Dorsolateral prefrontal cortex (tissue), 120 donors: ENCODE measurements at regions of chr15 and their contacts with region 1.

Region 1: GRCh38 chr15:99076552-99077308 is 28.1 kb upstream of the SYNM start:
- DNase-seq: peak in 5 of 10 donors; percentile 32 to 53 (median 39)
- H3K4me3 ChIP-seq: peak overlapping the region in 58 of 59 donors; percentile 12 to 65 (median 45)
- H3K27ac ChIP-seq: peak overlapping the region in 3 of 59 donors; percentile 32 to 74 (median 48)
- H3K27me3 ChIP-seq: no peaks in the 10 kb centered on the region
- CTCF ChIP-seq: peak; percentile 79 to 96 (median 91)

Region 2: DNA sequence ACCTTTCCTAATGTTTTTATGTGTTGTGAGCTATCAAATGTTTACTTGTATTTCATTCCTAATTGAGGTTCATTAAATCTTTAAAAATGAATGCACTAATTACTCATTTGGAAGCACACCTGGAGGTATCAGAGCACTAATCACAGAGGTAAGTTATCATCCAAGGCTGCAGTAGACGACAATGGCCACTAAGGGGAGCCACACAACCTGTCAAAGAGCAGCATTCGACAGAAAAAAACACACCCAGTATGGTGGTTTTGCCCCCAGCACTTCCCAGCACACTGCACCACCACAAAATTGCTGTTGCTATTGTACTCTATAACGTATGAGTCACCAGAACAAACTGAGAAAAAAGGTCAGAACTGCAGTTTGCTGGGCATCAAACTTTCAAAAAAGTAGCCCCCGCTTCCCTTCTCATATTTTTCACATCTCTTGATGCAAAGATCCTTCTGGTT is 634.3 kb before region 1 on chr15:
- intact Hi-C with region 1: loop called (anchors 5 to 10 kb)
- DNase-seq: peak in 5 of 10 donors; percentile 32 to 68 (median 62)
- H3K4me3 ChIP-seq: no peak overlapping the region
- H3K27ac ChIP-seq: no peak overlapping the region
- H3K27me3 ChIP-seq: peaks cover 0 to 11% (median 0%) of the 10 kb centered on the region in 45 donors
- CTCF ChIP-seq: peak; percentile 57 to 87 (median 77)

Region 3: GRCh38 chr15:98518823-98519561 is 557.7 kb before region 1 on chr15:
- intact Hi-C with region 1: loop called (anchors 5 kb)
- DNase-seq: peak in 4 of 10 donors; percentile 38 to 55 (median 48)
- H3K4me3 ChIP-seq: peak overlapping the region in 6 of 59 donors; percentile 5 to 23 (median 20)
- H3K27ac ChIP-seq: no peak overlapping the region
- H3K27me3 ChIP-seq: no peaks in the 10 kb centered on the region
- CTCF ChIP-seq: peak; percentile 66 to 97 (median 82)

Region 4: GRCh38 chr15:98523912-98524662 is 552.6 kb before region 1 on chr15:
- intact Hi-C with region 1: loop called (anchors 5 kb)
- DNase-seq: no peak
- H3K4me3 ChIP-seq: no peak overlapping the region
- H3K27ac ChIP-seq: peak overlapping the region in 1 of 59 donors; percentile 46
- H3K27me3 ChIP-seq: peaks cover 0 to 8% (median 0%) of the 10 kb centered on the region in 45 donors
- CTCF ChIP-seq: no peak

Region 5: DNA sequence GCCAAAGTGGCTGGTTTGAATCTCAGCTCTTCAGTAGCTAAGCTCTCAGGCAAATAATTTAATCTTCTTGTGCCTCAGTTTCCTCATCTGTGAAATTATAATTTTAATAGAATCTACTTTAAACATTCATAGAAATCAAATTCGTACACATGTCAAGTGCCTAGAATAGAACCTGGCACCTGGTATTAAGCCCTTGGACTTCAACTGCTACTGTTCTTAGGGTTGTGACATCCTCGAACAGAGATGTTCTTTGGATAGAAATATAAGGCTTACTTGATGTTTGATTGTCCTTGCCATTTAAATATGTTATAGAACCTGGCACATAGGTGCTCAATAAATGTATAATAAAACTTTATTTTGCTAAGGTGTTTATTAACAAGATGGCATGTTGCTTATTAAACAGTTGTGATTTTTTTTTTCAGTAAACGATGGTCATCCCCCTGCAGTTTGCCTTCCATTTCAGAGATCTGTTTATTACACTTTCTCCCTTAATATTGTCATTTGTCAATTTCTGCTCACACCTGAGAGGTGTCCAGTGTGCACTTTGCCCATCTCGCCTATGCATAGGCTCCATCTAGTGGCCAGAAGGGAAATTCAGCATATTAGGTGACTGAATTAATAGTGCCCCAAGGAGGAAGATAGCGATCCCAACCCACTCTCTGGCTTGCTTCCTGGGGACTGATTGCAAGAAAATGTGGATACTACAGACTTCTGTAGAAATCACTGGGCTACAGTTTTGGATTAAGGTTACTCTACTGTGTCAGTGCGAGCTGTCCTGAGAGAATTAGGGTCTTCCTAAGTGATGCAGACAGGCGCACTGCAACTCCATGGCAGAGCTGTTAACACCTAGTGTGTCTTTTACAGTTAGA is 417.7 kb before region 1 on chr15:
- intact Hi-C with region 1: loop called in 1 of 2 experiments (anchors 5 kb)
- DNase-seq: peak in 1 of 10 donors; percentile 47
- H3K4me3 ChIP-seq: peak overlapping the region in 2 of 59 donors; percentile 5 to 23
- H3K27ac ChIP-seq: peak overlapping the region in 7 of 59 donors; percentile 6 to 58 (median 11)
- H3K27me3 ChIP-seq: no peaks in the 10 kb centered on the region
- CTCF ChIP-seq: peak; percentile 66 to 93 (median 78)

Region 6: DNA sequence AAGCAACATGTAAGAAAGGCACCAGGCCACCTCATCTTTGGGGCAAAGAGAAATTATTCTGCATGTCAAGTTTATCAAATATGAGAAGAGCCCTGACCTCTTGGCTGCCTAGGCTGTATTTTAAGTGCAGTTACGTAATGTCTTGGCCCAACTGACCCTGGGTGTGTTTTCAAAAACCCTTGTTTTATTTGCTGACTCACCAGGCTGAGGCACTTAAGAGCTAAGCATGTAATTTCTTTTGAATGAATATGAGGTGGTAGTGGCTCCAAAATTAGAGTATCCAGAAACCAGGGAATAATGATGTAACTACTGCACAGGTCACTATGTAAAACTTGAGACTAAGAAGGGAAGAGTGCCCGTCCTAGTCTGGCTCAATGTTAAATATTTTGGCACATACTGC is 93.4 kb before region 1 on chr15:
- intact Hi-C with region 1: no loop called
- DNase-seq: no peak
- H3K4me3 ChIP-seq: no peak overlapping the region
- H3K27ac ChIP-seq: no peak overlapping the region
- H3K27me3 ChIP-seq: no peaks in the 10 kb centered on the region
- CTCF ChIP-seq: no peak